ENCODE measurements at regions of chr11 and their contacts with region 1.

Region 1: GRCh38 chr11:45182902-45183301 is 36.5 kb downstream of the PRDM11 start:
- DNase-seq: no peak
- H3K4me3 ChIP-seq: no peak overlapping the region
- CTCF ChIP-seq: peak; percentile 46

Region 2: DNA sequence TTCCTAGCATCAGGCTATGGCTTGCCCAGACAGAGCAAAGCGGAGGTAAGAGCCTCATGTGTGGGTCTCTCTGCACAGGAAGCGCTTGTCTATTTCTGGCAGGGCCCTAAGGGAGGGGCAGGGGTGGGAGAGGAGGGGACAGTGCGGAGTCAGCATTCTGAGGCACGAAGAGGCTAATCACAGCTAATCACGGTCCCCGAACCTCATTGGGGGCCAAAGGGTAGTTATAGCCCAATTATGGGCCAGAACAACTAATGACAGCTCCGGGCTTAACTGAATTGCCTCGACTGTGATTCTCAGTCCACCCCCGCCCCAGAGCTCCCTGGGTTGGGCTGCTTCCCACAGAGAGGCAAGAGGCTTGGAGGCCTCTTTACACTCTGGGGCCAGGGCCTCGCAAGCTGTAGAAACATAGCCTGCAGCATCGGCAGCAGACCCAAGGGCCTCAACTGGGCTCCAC is 109.2 kb before region 1 on chr11:
- CTCF ChIA-PET with region 1: no interaction called
- POLR2A ChIA-PET with region 1: no interaction called
- DNase-seq: no peak
- H3K4me3 ChIP-seq: no peak overlapping the region
- CTCF ChIP-seq: no peak

Region 3: GRCh38 chr11:45193695-45194094 is 10.8 kb after region 1 on chr11:
- CTCF ChIA-PET with region 1: interaction called, 21 read pairs
- POLR2A ChIA-PET with region 1: no interaction called
- DNase-seq: no peak
- H3K4me3 ChIP-seq: no peak overlapping the region
- CTCF ChIP-seq: no peak